T-cell (primary cell): ENCODE measurements at regions of chr19 and their contacts with region 1.

Region 1: GRCh38 chr19:40633207-40633606 is 32.0 kb downstream of the LTBP4 start:
- DNase-seq: no peak
- ATAC-seq: no peak
- H3K4me3 ChIP-seq: no peak overlapping the region
- H3K4me3 Mint-ChIP-seq: no peak overlapping the region
- H3K27ac ChIP-seq: no peak overlapping the region
- H3K27ac Mint-ChIP-seq: no peak overlapping the region
- H3K4me1 ChIP-seq: peaks cover 0 to 12% of the 10 kb centered on the region in 2 experiments
- H3K4me1 Mint-ChIP-seq: peaks cover 7 to 25% (median 9%) of the 10 kb centered on the region in 3 donors
- H3K27me3 ChIP-seq: peaks cover 0 to 14% of the 10 kb centered on the region in 2 experiments
- H3K27me3 Mint-ChIP-seq: peaks cover 0 to 3% of the 10 kb centered on the region in 2 donors

Region 2: DNA sequence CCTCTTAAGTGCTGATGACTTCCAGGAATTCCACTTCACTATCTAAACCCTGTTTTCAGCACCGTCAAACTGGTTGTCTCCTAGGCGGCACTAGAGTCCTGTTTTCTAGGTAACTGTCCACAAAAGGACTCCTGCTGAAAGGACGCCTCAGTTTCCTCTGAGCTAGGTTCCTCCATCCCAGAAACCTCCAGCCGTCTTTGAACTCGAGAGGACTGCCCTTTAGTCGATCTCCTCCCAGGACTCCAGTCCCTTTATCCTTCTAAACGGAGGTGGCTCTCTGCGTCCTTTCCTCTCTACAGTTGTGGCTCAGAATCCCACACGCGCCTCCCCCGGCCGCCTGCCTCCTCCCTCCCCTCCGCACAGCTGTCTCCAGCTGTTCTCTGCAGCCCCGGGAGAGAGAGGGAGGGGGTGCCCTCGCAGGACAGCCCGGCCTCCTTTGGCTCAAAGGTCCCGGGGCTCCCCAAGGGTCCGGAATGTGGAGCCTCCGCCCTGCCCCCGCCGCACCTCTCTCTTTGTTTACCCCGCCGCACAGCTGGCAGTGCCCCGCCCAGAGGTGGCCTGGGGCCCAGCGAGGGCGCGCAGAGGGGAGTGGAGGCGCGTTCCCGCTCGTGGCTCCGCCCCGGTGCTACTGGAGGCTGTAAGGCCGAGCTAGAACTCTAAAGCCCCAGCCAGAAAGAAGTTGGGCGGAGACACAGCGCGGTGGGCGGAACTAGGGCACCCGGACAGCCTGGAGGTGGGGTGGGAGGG is 29.6 kb before region 1 on chr19:
- CTCF ChIA-PET with region 1: interaction called in 1 of 2 experiments, 12 read pairs
- POLR2A ChIA-PET with region 1: no interaction called
- DNase-seq: peak; percentile 89 to 98 (median 96)
- ATAC-seq: peak; percentile 70 to 78 (median 72)
- H3K4me3 ChIP-seq: peak overlapping the region in 1 of 2 donors; percentile 57
- H3K4me3 Mint-ChIP-seq: peak overlapping the region; percentile 80 to 84 (median 83)
- H3K27ac ChIP-seq: peak overlapping the region; percentile 43
- H3K27ac Mint-ChIP-seq: peak overlapping the region; percentile 79 to 94
- H3K4me1 ChIP-seq: peaks cover 17 to 94% of the 10 kb centered on the region in 2 experiments
- H3K4me1 Mint-ChIP-seq: peaks cover 70 to 77% (median 71%) of the 10 kb centered on the region in 3 donors
- H3K27me3 ChIP-seq: peaks cover 4 to 45% of the 10 kb centered on the region in 2 experiments
- H3K27me3 Mint-ChIP-seq: peaks cover 17 to 29% of the 10 kb centered on the region in 2 donors